ENCODE measurements at regions of chr10 and their contacts with region 1.

Region 1: GRCh38 chr10:43461950-43462349 is 25.0 kb downstream of the ZNF487 start:
- DNase-seq: peak; percentile 62 to 91 (median 64)
- ATAC-seq: peak; percentile 94
- H3K4me3 ChIP-seq: no peak overlapping the region
- H3K27ac ChIP-seq: no peak overlapping the region
- H3K4me1 ChIP-seq: no peaks in the 10 kb centered on the region; a peak in 1 of 5 replicates
- H3K27me3 ChIP-seq: peaks cover 4 to 5% of the 10 kb centered on the region in 2 experiments; a peak in 2 of 5 replicates
- CTCF ChIP-seq: peak; percentile 68 to 95 (median 77); a peak in 5 of 6 replicates
- EP300 ChIP-seq: no peak
- POLR2A ChIP-seq: no peak
- RAD21 ChIP-seq: peak; percentile 91 to 97

Region 2: DNA sequence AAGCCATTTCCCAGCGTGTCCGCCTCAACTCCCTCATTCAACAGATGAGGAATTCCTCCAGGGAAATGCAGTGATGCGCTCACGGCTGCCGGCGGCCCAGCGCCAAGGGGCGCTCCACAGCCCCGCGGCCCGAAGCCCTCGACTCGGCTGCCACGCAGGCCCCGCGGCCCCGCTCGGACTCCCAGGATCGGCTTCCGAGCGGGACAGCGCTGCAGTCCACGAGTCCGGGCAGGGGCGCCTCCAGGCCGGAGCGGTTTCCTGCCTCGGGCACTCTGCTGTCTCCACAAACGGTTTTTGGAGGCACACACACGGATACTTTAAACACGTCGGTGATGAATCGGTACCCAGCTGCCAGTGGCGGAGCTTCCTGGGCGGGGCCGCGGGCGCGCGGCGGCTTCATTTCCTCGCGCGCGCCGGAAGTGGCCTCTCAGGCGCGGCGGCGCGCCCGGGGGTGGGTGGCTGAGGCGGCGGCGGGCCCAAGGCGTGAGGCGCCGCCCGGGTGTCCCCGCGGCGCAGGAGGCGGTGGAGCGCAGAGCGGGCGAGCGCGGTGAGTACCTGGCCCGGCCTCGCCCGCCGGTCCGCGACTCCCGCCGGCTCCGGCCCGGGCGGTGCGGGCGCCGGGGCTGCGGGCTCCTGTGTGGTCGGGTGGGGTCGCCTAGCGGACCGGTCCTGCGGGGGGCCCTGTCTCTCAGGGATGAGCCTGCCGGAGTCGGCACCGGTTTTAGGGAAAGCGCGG is 323.8 kb before region 1 on chr10 and contains the start of gene CSGALNACT2:
- CTCF ChIA-PET with region 1: no interaction called
- POLR2A ChIA-PET with region 1: no interaction called
- in situ Hi-C with region 1: no loop called
- intact Hi-C with region 1: loop called (anchors 10 kb)
- DNase-seq: peak; percentile 87 to 92 (median 89)
- ATAC-seq: peak; percentile 97
- H3K4me3 ChIP-seq: peak within 1 kb of the TSS; percentile 87
- H3K27ac ChIP-seq: peak within 1 kb of the TSS; percentile 32; the same call in 2 of the 3 replicates
- H3K4me1 ChIP-seq: peaks cover 9 to 25% of the 10 kb centered on the region in 2 experiments; a peak in 4 of 5 replicates
- H3K27me3 ChIP-seq: peaks cover 0 to 4% of the 10 kb centered on the region in 2 experiments; a peak in 2 of 5 replicates
- CTCF ChIP-seq: 0 out of 6 replicates have a peak, but pooled peaks of 1 of the 3 experiments have one; percentile 4
- EP300 ChIP-seq: no peak
- POLR2A ChIP-seq: peak; percentile 59; the same call in 1 of the 2 replicates
- RAD21 ChIP-seq: no peak
- polyA plus RNA-seq, gene CSGALNACT2: 1.4 to 1.9 TPM

Region 3: DNA sequence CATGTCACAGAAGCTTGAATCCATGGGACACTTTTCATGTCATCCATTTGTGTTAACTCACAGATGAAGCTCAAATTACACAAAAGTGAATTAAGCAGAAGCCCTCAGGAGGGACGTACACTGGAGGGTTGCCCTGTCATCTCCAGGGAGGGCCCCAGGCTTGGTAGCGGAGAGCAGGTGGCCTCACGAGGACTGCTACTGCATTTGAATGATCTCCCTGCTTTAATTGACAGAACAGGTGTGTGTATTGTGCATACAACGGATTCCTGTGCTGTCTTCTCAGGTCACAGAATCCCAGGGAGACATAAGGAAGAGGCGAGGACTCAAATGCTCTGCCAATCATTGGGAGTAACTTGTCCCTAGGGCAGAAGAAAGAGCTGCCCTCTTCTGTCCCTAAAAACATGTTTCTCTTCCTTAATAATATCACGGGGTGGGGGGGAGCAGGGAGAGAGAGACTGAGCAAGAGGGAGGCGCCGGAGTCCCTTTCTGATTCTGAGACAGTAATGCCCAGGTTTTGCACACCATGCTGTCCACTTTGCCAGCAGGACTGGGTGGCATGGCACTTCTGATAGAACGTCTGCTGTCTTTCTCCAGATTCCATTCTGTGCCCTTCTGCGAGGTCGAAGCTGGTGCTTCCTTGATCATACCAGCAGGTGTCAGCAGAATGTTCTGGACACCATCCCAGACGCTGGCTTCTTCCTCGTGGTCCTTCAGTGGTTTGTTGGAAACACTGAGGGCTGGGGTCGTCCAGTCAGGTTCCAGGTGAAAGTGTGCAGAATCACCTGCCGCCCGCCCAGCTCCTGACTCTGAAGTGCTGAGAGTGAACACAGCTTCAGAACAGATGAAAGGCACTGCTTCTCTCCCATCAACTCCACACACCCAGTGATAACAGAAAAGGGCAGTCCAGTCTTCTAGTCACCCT is 168.9 kb before region 1 on chr10:
- CTCF ChIA-PET with region 1: interaction called, 32 read pairs
- POLR2A ChIA-PET with region 1: interaction called, 5 read pairs
- in situ Hi-C with region 1: loop called (anchors 5 kb)
- intact Hi-C with region 1: loop called (anchors 1 kb)
- DNase-seq: peak; percentile 47 to 68 (median 54)
- ATAC-seq: peak; percentile 91
- H3K4me3 ChIP-seq: no peak overlapping the region
- H3K27ac ChIP-seq: no peak overlapping the region
- H3K4me1 ChIP-seq: peaks cover 0 to under 1% of the 10 kb centered on the region in 2 experiments; a peak in 1 of 5 replicates
- H3K27me3 ChIP-seq: peaks cover 2 to 32% of the 10 kb centered on the region in 2 experiments; a peak in 4 of 5 replicates
- CTCF ChIP-seq: peak; percentile 76 to 87 (median 84)
- EP300 ChIP-seq: no peak
- POLR2A ChIP-seq: no peak
- RAD21 ChIP-seq: peak; percentile 85 to 93

Region 4: GRCh38 chr10:43524434-43525247 is 62.7 kb after region 1 on chr10:
- CTCF ChIA-PET with region 1: no interaction called
- POLR2A ChIA-PET with region 1: no interaction called
- in situ Hi-C with region 1: no loop called
- intact Hi-C with region 1: loop called (anchors 10 kb)
- DNase-seq: no peak
- ATAC-seq: no peak
- H3K4me3 ChIP-seq: no peak overlapping the region
- H3K27ac ChIP-seq: no peak overlapping the region
- H3K4me1 ChIP-seq: no peaks in the 10 kb centered on the region
- H3K27me3 ChIP-seq: no peaks in the 10 kb centered on the region
- CTCF ChIP-seq: no peak
- EP300 ChIP-seq: no peak
- POLR2A ChIP-seq: no peak
- RAD21 ChIP-seq: no peak

Measured in K562 (cell line).